Common myeloid progenitor, CD34-positive (primary cell): ENCODE measurements at regions of chr6 and their contacts with region 1.

Region 1: DNA sequence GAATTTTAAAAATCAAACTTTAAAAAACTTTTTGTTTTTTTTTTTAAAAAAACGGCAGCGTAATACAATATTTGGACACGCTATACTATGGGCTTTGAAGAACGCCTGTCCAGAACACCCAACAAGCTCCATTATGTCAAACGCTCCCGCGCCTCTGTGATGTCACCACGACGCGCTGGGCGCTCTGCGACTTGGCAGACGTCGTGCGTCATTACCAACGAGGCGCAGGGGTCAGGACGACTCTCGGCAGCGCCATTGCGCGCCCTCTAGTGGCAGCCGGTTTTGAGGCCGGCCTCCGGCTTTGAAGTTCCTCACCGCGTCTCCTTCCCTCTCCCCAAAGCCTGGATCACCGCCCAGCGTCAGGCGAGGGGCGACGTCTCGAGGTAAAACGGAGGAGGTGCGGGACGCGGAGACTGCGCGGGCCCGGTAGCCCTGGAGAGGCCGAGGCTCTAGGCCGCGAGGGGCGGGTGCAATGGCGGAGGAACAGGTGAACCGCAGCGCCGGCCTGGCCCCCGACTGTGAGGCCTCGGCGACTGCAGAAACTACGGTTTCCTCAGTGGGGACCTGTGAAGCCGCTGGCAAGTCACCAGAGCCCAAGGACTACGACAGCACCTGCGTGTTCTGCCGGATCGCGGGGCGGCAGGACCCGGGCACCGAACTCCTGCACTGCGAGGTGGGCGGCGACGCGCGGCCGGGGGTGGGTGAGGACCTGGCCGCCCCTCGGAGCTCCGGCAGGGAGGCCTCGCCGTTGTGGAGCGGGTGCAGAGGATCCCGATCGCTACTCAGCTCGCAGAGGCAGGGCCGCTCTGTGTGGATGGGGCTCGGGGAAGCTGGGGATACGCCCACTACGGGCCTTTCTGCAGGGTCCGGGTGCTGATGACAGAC is at the start of gene HINT3:
- DNase-seq: peak; percentile 99
- H3K4me3 ChIP-seq: peak within 1 kb of the TSS; percentile 83 to 98 (median 90)
- H3K27ac ChIP-seq: peak within 1 kb of the TSS; percentile 83 to 93
- H3K4me1 ChIP-seq: peaks cover 13 to 27% (median 16%) of the 10 kb centered on the region in 4 experiments
- H3K27me3 ChIP-seq: no peaks in the 10 kb centered on the region

Region 2: GRCh38 chr6:125528621-125529041 is 428.1 kb before region 1 on chr6:
- CTCF ChIA-PET with region 1: no interaction called
- POLR2A ChIA-PET with region 1: no interaction called
- DNase-seq: no peak
- H3K4me3 ChIP-seq: no peak overlapping the region
- H3K27ac ChIP-seq: no peak overlapping the region
- H3K4me1 ChIP-seq: no peaks in the 10 kb centered on the region
- H3K27me3 ChIP-seq: peaks cover 0 to 42% (median 16%) of the 10 kb centered on the region in 5 experiments

Region 3: DNA sequence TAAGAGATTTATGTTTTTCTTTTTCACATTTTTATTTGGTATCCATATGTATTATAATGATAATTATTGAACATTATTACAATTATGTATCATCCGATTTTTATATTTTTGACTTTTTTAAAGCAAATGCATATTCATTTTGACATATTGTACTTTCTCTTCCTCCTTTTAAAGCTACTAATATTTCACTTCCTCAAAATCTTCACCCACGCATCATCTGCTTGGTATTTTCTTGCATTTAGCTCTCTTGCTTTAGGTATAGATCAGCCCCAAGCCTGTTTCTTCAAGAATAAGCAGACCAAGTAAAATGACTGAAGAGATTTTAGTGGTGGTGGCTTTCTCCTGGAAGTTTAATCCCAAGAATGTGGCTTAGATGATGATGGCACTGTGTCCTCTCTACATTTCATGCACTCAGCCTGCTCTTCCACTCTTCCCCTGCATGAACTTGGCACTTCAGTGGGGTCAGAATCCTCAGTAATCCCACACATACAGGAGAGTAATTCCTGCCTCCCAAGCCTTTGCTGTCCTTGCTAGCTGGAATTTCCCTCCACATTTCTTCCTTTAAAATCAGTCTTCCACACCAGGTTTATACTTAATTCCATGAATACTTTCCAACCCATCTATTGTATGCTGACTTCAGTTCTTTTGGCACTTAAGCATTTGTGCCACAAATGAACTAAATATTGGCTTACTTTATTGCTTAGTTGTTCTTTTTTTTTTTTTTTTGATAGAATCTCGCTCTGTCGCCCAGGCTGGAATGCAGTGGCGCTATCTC is 157.8 kb before region 1 on chr6:
- CTCF ChIA-PET with region 1: interaction called, 13 read pairs
- POLR2A ChIA-PET with region 1: no interaction called
- DNase-seq: peak in 2 of 3 donors; percentile 75 to 87
- H3K4me3 ChIP-seq: peak overlapping the region in 1 of 7 experiments; percentile 11
- H3K27ac ChIP-seq: no peak overlapping the region
- H3K4me1 ChIP-seq: peaks cover 33 to 65% (median 48%) of the 10 kb centered on the region in 4 experiments
- H3K27me3 ChIP-seq: no peaks in the 10 kb centered on the region

Region 4: GRCh38 chr6:125888989-125889656 is 67.6 kb before region 1 on chr6:
- CTCF ChIA-PET with region 1: interaction called, 20 read pairs
- POLR2A ChIA-PET with region 1: no interaction called
- DNase-seq: peak; percentile 51 to 73 (median 70)
- H3K4me3 ChIP-seq: no peak overlapping the region
- H3K27ac ChIP-seq: no peak overlapping the region
- H3K4me1 ChIP-seq: peaks cover 0 to 20% (median 1%) of the 10 kb centered on the region in 4 experiments
- H3K27me3 ChIP-seq: no peaks in the 10 kb centered on the region

Region 5: GRCh38 chr6:125906158-125906998 is 50.4 kb before region 1 on chr6:
- CTCF ChIA-PET with region 1: interaction called, 127 read pairs
- POLR2A ChIA-PET with region 1: interaction called, 3 read pairs
- DNase-seq: peak; percentile 53 to 66 (median 55)
- H3K4me3 ChIP-seq: no peak overlapping the region
- H3K27ac ChIP-seq: no peak overlapping the region
- H3K4me1 ChIP-seq: peaks cover 0 to 10% (median 7%) of the 10 kb centered on the region in 4 experiments
- H3K27me3 ChIP-seq: no peaks in the 10 kb centered on the region

Region 6: DNA sequence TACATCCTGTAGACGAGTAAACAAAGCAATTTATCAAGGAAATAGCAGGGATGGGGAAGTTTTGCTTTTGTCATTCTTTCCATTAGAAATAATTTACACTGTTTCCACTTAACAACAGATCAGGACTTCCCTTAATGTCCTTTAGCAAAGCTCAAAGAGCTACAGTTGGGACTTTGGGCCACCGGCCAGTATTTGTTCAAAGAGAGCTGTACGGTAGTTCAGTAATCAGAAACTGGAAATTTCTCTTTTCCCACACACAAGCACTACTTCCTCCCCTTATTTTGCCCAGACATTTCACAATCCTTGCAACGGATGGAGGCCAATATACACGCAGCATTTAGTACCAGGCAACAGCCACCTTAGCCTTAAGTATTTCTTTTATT is 12.3 kb before region 1 on chr6:
- CTCF ChIA-PET with region 1: interaction called, 23 read pairs
- POLR2A ChIA-PET with region 1: no interaction called
- DNase-seq: peak; percentile 28 to 56 (median 43)
- H3K4me3 ChIP-seq: peak overlapping the region in 2 of 7 experiments; percentile 50 to 57
- H3K27ac ChIP-seq: peak overlapping the region; percentile 55 to 65
- H3K4me1 ChIP-seq: peaks cover 8 to 48% (median 16%) of the 10 kb centered on the region in 4 experiments
- H3K27me3 ChIP-seq: no peaks in the 10 kb centered on the region